Activated B cell treated with CpG ODN at 0.5 μM for 24 hours (primary cell): ENCODE measurements at regions of chr1 and their contacts with region 1.

Region 1: GRCh38 chr1:218473522-218473921 is 128.4 kb downstream of the TGFB2 start:
- DNase-seq: no peak
- ATAC-seq: peak; percentile 74
- H3K4me3 Mint-ChIP-seq: peak overlapping the region; percentile 9
- H3K27ac Mint-ChIP-seq: peak overlapping the region; percentile 83
- H3K4me1 Mint-ChIP-seq: peaks cover 46% of the 10 kb centered on the region
- H3K27me3 Mint-ChIP-seq: no peaks in the 10 kb centered on the region
- CTCF ChIP-seq: no peak

Region 2: DNA sequence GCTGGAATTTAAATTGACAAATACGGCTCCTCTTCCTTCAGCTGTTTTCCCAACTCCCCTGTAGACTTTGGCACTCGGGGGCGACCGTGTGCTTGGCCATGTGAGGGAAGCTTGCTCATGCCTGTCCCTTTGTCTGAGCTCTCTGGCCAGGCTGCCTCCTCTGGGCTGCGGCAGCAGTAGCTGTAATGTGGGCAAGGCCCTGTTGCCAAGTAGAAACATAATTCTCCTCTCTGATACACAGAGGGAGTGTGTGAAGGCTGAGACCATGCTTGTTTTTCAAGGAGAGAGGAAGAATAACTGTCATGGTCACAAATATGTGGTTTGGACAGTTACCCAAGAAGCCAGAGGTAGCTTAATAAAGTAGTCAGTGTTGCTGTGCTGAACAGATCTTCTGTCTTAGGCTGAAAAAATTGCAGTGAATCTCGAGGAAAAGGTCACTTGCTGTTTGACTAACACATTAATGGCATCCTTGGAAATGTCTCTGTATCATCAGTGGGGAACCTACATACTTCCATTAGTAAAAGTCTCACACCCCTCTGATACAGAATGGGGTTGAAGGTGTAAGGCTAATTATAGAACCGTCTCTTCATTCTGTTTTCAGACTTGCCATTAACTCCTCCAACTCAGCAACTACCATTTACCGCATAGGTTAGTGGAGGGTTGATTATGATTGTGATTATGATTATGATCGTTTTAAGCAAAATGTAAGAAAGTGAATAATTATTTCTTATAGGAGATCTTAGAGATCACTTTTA is 33.8 kb before region 1 on chr1:
- CTCF ChIA-PET with region 1: no interaction called
- POLR2A ChIA-PET with region 1: no interaction called
- intact Hi-C with region 1: no loop called
- DNase-seq: no peak
- ATAC-seq: no peak
- H3K4me3 Mint-ChIP-seq: no peak overlapping the region
- H3K27ac Mint-ChIP-seq: no peak overlapping the region
- H3K4me1 Mint-ChIP-seq: peaks cover 3% of the 10 kb centered on the region
- H3K27me3 Mint-ChIP-seq: no peaks in the 10 kb centered on the region
- CTCF ChIP-seq: no peak

Region 3: DNA sequence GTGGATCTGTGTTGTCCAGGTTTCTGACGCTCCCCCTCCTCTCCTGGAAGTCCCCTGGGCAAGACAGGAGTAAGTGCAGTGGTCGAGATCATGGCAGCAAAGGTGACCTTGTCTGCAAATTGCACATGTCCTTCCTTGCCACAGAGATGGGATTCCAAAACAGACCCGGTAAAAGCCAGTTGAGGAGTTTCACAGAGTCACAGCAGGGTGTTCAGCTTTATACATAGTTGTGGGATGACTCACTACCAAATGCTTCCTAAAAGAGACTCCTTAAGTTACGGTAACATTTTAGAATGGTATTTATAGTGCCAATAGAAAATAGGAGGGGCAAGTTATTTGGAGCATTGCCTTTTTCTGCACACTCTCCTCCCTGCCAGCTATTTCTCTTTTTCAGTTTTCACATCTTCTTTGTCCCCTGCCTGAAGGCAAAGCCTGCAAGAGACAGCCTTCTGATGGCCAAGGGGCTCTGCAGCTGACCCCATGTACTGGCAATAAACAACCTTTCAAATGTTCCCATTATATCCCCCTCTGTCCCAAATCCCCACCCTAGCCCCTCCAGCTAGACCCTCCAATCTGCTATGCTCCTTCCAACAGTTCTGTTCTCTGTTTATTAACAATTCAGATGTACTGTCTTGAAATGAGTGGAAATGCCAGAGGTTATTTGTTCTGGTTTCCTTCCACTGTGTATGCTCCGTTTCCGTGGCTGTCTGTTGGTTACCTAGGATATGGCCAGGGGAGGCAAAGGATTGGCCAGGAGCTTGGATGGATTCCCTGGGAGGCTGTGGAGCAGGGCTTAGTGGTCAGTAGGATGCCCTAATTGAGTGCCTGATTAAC is 13.4 kb before region 1 on chr1:
- CTCF ChIA-PET with region 1: no interaction called
- POLR2A ChIA-PET with region 1: no interaction called
- intact Hi-C with region 1: loop called (anchors 2 kb)
- DNase-seq: no peak
- ATAC-seq: peak; percentile 73
- H3K4me3 Mint-ChIP-seq: no peak overlapping the region
- H3K27ac Mint-ChIP-seq: peak overlapping the region; percentile 16
- H3K4me1 Mint-ChIP-seq: peaks cover 20% of the 10 kb centered on the region
- H3K27me3 Mint-ChIP-seq: no peaks in the 10 kb centered on the region
- CTCF ChIP-seq: no peak

Region 4: GRCh38 chr1:218488986-218489385 is 15.5 kb after region 1 on chr1:
- CTCF ChIA-PET with region 1: no interaction called
- POLR2A ChIA-PET with region 1: no interaction called
- intact Hi-C with region 1: no loop called
- DNase-seq: no peak
- ATAC-seq: no peak
- H3K4me3 Mint-ChIP-seq: no peak overlapping the region
- H3K27ac Mint-ChIP-seq: no peak overlapping the region
- H3K4me1 Mint-ChIP-seq: no peaks in the 10 kb centered on the region
- H3K27me3 Mint-ChIP-seq: no peaks in the 10 kb centered on the region
- CTCF ChIP-seq: no peak

Region 5: DNA sequence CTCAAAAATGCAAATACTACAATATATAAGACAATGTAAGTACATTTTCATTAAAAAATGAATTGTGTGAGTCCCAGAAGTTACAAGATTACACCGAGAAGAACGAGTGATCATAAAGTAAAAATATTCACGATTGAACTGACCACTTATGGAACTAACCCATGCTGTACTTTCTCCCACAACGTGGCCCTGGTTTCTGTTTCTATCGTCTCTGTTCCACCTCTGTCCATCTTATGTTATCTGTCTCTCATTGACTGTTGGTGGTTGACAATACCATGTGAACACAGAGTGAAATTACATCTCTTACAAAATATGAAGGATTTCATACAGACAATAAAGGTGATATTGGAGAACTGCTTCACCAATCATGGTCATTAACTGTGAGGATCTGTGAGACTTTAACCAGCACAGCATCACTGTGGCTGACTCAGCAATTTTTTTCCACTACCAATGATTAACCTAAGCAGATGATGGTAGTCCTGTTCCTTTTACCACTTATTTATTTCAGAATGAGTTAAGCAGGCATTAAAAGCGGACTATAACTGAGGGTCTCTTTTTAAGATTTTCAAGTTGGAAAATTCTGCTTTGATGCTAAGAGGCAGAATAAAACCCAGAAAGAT is 36.7 kb after region 1 on chr1:
- CTCF ChIA-PET with region 1: no interaction called
- POLR2A ChIA-PET with region 1: no interaction called
- intact Hi-C with region 1: loop called (anchors 5 kb)
- DNase-seq: no peak
- ATAC-seq: no peak
- H3K4me3 Mint-ChIP-seq: no peak overlapping the region
- H3K27ac Mint-ChIP-seq: no peak overlapping the region
- H3K4me1 Mint-ChIP-seq: peaks cover 17% of the 10 kb centered on the region
- H3K27me3 Mint-ChIP-seq: no peaks in the 10 kb centered on the region
- CTCF ChIP-seq: no peak